Mammary epithelial cell (primary cell): ENCODE measurements at regions of chr22 and their contacts with region 1.

Region 1: DNA sequence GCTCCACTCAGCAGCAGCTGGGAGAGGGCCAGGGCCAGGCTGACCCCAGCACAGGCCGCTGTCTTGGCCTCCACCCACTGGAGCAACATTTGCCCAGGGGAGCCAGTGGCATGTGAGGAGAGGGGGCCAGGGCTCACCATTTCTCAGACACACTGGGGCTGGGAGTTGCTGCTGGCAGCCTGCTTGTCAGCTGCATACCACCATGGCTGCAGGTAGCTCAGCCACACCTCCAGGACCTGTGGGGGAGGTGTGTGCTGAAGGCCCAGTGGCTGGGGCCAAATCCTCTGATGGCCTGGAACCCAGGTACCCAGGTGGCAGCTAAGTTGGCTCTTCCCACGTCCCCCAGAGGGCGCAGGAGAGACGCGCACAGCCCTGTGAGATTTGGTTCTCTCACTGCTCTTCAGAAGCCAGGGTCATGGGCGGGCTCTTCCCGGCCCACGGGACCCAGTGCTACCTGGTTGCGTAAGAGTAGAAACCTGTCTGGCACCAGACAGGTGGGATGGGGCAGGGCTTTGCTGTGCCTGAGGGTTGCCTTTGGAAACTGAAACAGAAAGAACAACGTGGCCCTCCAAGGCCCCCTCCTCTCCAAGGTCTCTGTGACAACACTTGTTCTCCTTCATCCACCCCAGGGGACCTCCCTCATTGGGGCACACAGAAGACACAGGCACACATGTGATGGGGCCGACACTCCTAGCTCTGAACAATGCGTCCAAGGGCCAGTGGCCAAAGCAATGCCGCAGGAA is 98.8 kb downstream of the MED15 start:
- DNase-seq: peak; percentile 79
- H3K4me3 ChIP-seq: no peak overlapping the region
- H3K27ac ChIP-seq: no peak overlapping the region
- H3K4me1 ChIP-seq: peaks cover 6% of the 10 kb centered on the region
- H3K27me3 ChIP-seq: no peaks in the 10 kb centered on the region
- CTCF ChIP-seq: peak; percentile 78 to 95

Region 2: DNA sequence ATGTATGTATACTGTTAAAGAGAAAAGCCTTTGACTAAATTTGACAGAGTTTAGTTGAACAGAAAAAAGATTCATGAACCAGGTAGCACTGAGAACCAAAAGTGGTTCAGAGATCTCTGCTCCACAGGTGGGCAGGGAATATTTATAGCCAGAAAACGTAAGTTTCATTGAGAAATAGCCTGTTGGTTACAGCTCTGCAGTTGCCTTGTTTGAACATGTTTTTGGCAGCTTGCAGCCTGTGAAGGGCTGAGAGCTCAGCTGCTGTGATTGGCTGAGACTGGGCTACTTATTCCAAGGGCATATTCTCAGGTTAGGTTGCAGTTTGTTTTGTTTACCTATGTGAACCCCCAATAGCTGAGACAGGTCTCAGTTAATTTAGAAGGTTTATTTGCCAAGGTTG is 225.7 kb before region 1 on chr22:
- CTCF ChIA-PET with region 1: no interaction called
- dilution Hi-C with region 1: no loop called
- in situ Hi-C with region 1: no loop called
- intact Hi-C with region 1: no loop called
- DNase-seq: peak; percentile 60
- H3K4me3 ChIP-seq: no peak overlapping the region
- H3K27ac ChIP-seq: no peak overlapping the region
- H3K4me1 ChIP-seq: peaks cover 8% of the 10 kb centered on the region
- H3K27me3 ChIP-seq: peaks cover 2% of the 10 kb centered on the region
- CTCF ChIP-seq: no peak

Region 3: GRCh38 chr22:20418211-20418788 is 187.9 kb before region 1 on chr22:
- CTCF ChIA-PET with region 1: no interaction called
- dilution Hi-C with region 1: no loop called
- in situ Hi-C with region 1: no loop called
- intact Hi-C with region 1: loop called (anchors 5 kb)
- DNase-seq: peak; percentile 49
- H3K4me3 ChIP-seq: peak overlapping the region in 2 of 3 experiments; percentile 51 to 60
- H3K27ac ChIP-seq: no peak overlapping the region
- H3K4me1 ChIP-seq: peaks cover 5% of the 10 kb centered on the region
- H3K27me3 ChIP-seq: no peaks in the 10 kb centered on the region
- CTCF ChIP-seq: peak; percentile 61 to 87

Region 4: DNA sequence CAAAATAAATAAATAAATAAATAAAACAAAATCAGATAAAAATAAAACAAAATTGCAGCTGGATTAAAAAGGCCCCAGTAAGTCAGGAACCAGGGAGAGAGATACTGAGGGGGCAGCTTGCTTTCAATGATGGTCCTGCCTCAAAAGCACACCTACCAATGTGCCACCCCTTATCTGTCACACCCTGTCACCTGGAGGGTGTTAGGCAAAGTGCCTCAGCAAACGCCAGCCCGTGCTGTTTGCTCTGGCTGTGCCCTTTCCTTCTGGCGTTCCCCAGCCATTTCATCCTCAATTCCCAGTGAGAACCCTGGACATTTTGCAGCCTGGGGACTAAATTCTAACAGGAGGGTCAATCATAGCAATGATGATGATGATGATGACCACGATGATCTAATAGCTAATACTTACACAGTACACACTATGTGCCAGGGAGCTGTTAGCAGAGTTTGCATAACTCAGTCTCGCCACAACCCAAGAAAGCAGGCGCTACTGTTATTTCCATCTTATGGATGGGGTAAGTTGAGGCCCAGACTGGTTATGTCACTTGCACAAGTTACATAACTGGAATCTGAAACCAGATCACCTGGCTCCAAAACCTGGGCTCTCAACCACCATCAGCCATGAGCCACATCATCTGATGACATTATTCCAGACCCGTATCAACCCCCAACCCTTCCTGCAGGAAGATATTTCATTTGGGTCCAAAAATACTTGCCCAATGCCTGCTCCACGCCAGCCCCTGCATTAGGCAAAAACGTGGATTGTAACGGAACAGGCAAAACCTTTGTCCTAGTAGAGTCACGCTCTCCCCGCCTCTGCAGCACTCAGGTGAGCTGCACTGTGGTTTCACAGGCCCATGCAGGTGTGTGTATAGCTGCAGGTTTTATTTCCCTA is 35.0 kb after region 1 on chr22:
- CTCF ChIA-PET with region 1: no interaction called
- dilution Hi-C with region 1: no loop called
- in situ Hi-C with region 1: no loop called
- intact Hi-C with region 1: no loop called
- DNase-seq: no peak
- H3K4me3 ChIP-seq: no peak overlapping the region
- H3K27ac ChIP-seq: no peak overlapping the region
- H3K4me1 ChIP-seq: no peaks in the 10 kb centered on the region
- H3K27me3 ChIP-seq: no peaks in the 10 kb centered on the region
- CTCF ChIP-seq: no peak

Region 5: DNA sequence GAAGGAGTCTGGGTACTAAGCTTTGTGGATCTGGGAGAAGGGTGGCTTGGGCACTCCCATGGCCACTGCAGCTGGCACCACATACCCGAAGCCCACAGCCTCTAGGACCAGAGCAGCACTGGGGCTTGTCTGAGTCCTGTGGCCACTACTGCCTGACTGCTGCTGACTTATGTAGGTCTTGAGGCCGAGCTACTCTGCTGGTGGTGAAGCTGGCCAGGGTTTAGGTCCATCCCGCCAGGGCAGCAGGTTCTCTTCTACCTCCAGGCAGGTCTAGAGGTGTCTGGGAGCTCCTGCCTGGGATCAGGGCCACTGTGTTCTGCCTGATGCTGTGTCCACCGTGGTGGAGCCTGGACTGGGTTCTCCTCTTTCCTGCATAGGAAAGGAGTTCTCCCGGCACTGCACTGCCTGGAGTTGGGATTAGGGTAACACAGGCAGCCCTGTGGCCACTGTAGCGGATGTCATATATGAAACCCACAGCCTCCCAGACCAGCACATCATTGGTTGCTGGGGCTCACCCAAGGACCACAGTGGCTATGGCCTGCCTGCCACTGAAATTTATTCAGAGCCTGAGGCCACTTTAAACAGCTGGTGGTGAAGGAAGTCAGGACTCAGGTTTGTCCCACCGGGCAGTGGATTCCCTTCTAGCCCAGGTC is 57.9 kb after region 1 on chr22:
- CTCF ChIA-PET with region 1: no interaction called
- dilution Hi-C with region 1: no loop called
- in situ Hi-C with region 1: no loop called
- intact Hi-C with region 1: loop called (anchors 10 kb)
- DNase-seq: no peak
- H3K4me3 ChIP-seq: no peak overlapping the region
- H3K27ac ChIP-seq: no peak overlapping the region
- H3K4me1 ChIP-seq: peaks cover 6% of the 10 kb centered on the region
- H3K27me3 ChIP-seq: peaks cover 3% of the 10 kb centered on the region
- CTCF ChIP-seq: no peak

Region 6: GRCh38 chr22:20741634-20742581 is 135.7 kb after region 1 on chr22:
- CTCF ChIA-PET with region 1: no interaction called
- dilution Hi-C with region 1: no loop called
- in situ Hi-C with region 1: no loop called
- intact Hi-C with region 1: loop called (anchors 1 kb)
- DNase-seq: peak; percentile 21
- H3K4me3 ChIP-seq: no peak overlapping the region
- H3K27ac ChIP-seq: no peak overlapping the region
- H3K4me1 ChIP-seq: no peaks in the 10 kb centered on the region
- H3K27me3 ChIP-seq: no peaks in the 10 kb centered on the region
- CTCF ChIP-seq: peak; percentile 73 to 75